ENCODE measurements at regions of chr10 and their contacts with region 1.

Region 1: GRCh38 chr10:92290837-92291615 is at the starts of genes CPEB3 and MARCHF5:
- DNase-seq: peak; percentile 67
- H3K4me3 ChIP-seq: peak within 1 kb of the TSS; percentile 97
- CTCF ChIP-seq: peak; percentile 76

Region 2: DNA sequence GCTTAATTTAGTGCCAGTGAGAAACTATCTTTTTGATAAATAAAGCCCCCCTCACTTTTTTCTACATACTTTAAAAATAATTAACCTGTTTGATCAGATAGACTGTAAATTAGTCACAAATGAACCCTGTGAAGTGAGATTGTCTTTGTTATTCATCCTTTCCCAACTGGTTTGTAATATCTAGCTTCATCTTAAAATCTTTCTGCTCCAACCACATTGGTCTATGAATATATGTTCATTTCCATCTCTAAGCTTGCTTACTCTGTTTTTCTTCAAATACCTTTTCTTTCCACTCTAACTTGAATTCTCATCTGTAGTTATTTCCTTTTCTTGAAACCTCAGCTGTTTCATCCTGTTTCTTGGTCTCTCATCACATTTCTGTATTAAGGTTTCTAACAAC is 12.1 kb after region 1 on chr10:
- CTCF ChIA-PET with region 1: interaction called, 24 read pairs
- POLR2A ChIA-PET with region 1: interaction called, 3 read pairs
- DNase-seq: no peak
- H3K4me3 ChIP-seq: no peak overlapping the region
- CTCF ChIP-seq: no peak